ENCODE measurements at regions of chr3 and their contacts with region 1.

Region 1: DNA sequence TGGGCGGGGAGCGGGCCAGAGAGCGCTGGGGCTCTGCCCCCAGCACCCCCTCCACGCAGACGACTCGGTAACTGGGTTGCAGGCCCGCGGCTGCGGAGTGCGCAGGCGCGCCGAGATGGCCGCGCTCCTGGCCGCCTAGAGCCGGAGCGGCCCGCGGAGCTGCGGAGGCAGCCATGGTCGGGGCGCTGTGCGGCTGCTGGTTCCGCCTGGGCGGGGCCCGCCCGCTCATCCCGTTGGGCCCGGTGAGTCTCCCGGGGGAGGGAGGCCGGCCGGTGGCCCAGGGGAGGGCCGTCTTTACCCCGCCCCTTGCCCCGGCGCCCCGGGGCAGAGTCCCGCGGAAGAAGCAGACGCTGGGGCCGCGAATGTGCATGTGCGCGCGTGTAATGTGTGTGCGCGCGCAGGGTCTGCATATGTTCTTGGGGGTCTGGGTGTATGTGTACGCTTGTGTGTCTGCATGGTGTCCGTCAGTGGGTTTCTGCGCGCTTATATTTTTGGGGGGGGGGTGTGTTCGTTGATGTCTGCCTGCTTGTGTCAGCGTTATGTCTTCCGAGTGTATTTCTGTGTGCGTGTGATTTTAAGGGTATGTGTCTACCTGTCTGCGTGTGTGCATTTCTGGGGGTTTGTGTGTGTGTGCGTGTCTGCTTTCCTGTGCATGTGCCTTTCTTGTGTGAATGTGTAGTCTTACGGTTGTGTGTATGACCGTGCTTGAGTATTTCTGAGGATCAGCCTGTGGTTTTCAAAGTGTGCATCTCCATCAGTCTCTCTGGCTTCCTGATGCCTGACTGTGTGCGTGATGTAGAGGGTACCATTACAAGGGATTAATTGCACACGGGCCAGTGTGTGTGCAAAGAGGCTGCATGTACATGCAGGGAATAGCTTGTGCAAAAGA is at the start of gene ABHD14A:
- DNase-seq: peak; percentile 70
- H3K4me3 Mint-ChIP-seq: peak within 1 kb of the TSS; percentile 99
- H3K27ac Mint-ChIP-seq: peak within 1 kb of the TSS; percentile 97
- H3K4me1 Mint-ChIP-seq: peaks cover 37% of the 10 kb centered on the region
- H3K27me3 Mint-ChIP-seq: no peaks in the 10 kb centered on the region
- total RNA-seq, gene ABHD14A: 5.4 to 5.7 TPM

Region 2: GRCh38 chr3:51703751-51704510 is 271.3 kb before region 1 on chr3:
- CTCF ChIA-PET with region 1: no interaction called
- intact Hi-C with region 1: no loop called
- DNase-seq: no peak
- H3K4me3 Mint-ChIP-seq: no peak overlapping the region
- H3K27ac Mint-ChIP-seq: no peak overlapping the region
- H3K4me1 Mint-ChIP-seq: peaks cover 13% of the 10 kb centered on the region
- H3K27me3 Mint-ChIP-seq: no peaks in the 10 kb centered on the region

Region 3: GRCh38 chr3:51955893-51956770 is 19.1 kb before region 1 on chr3:
- CTCF ChIA-PET with region 1: interaction called, 11 read pairs
- intact Hi-C with region 1: loop called (anchors 2 kb)
- DNase-seq: peak; percentile 50
- H3K4me3 Mint-ChIP-seq: peak overlapping the region; percentile 33
- H3K27ac Mint-ChIP-seq: no peak overlapping the region
- H3K4me1 Mint-ChIP-seq: no peaks in the 10 kb centered on the region
- H3K27me3 Mint-ChIP-seq: peaks cover 17% of the 10 kb centered on the region

Region 4: GRCh38 chr3:51962854-51963530 is 12.2 kb before region 1 on chr3:
- CTCF ChIA-PET with region 1: interaction called, 11 read pairs
- intact Hi-C with region 1: no loop called
- DNase-seq: no peak
- H3K4me3 Mint-ChIP-seq: no peak overlapping the region
- H3K27ac Mint-ChIP-seq: no peak overlapping the region
- H3K4me1 Mint-ChIP-seq: peaks cover 6% of the 10 kb centered on the region
- H3K27me3 Mint-ChIP-seq: no peaks in the 10 kb centered on the region